Activated B cell treated with CpG ODN at 0.5 μM for 24 hours (primary cell): ENCODE measurements at regions of chr5 and their contacts with region 1.

Region 1: GRCh38 chr5:89282554-89283510 is 399.8 kb upstream of the MEF2C start:
- DNase-seq: no peak
- ATAC-seq: peak; percentile 45
- H3K4me3 Mint-ChIP-seq: no peak overlapping the region
- H3K27ac Mint-ChIP-seq: peak overlapping the region; percentile 32
- H3K4me1 Mint-ChIP-seq: peaks cover 75% of the 10 kb centered on the region
- H3K27me3 Mint-ChIP-seq: no peaks in the 10 kb centered on the region
- CTCF ChIP-seq: no peak

Region 2: DNA sequence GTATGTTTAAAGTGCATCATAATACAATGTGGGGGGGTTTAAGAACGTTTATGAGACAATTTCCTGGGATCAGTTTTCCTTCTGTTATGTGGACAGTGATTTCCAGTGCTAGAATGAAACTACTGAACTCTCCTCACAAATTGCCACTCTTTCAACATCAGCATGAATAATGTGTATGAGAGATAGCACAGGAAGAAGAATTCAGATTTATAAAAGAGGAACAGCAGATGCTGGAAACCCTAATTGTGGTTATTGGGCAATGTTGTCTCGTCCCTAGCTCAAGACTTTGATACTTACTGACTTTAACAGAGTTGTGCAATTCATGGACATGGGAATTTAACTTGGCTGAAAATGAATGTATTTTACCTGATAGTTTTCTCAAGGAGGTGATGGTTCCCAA is 11.0 kb after region 1 on chr5:
- CTCF ChIA-PET with region 1: no interaction called
- POLR2A ChIA-PET with region 1: interaction called, 5 read pairs
- intact Hi-C with region 1: loop called (anchors 1 kb)
- DNase-seq: no peak
- ATAC-seq: peak; percentile 52
- H3K4me3 Mint-ChIP-seq: peak overlapping the region; percentile 54
- H3K27ac Mint-ChIP-seq: peak overlapping the region; percentile 68
- H3K4me1 Mint-ChIP-seq: peaks cover 37% of the 10 kb centered on the region
- H3K27me3 Mint-ChIP-seq: no peaks in the 10 kb centered on the region
- CTCF ChIP-seq: no peak

Region 3: DNA sequence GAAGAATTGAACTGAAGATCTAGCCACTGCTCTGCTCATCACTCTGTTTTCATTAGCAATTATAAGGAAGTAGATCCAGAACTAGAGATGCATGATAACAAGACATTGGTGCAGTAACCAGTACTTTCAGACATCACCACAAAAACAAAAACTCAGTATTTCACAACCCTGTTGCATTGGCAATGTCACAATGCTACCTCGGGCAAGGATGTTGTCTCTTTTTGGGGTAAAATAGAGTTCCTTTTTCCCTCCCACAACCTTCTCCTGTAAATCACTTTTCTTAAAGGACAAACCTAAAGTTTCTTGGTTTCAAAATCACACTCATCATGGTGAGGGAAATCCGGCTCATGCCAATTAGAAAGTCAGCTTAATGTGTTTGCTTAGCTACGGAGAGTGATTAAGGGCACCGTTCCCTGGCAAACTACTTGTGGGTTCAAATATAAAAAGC is 20.2 kb after region 1 on chr5:
- CTCF ChIA-PET with region 1: no interaction called
- POLR2A ChIA-PET with region 1: interaction called, 4 read pairs
- intact Hi-C with region 1: loop called (anchors 2 kb)
- DNase-seq: no peak
- ATAC-seq: peak; percentile 64
- H3K4me3 Mint-ChIP-seq: no peak overlapping the region
- H3K27ac Mint-ChIP-seq: peak overlapping the region; percentile 84
- H3K4me1 Mint-ChIP-seq: peaks cover 62% of the 10 kb centered on the region
- H3K27me3 Mint-ChIP-seq: no peaks in the 10 kb centered on the region
- CTCF ChIP-seq: no peak